HEK293 (cell line): ENCODE measurements at regions of chr15 and their contacts with region 1.

Region 1: GRCh38 chr15:78108299-78109084 is 16.1 kb downstream of the SH2D7 start:
- H3K4me3 ChIP-seq: no peak overlapping the region
- H3K27ac ChIP-seq: no peak overlapping the region
- H3K4me1 ChIP-seq: no peaks in the 10 kb centered on the region
- CTCF ChIP-seq: peak; percentile 95

Region 2: DNA sequence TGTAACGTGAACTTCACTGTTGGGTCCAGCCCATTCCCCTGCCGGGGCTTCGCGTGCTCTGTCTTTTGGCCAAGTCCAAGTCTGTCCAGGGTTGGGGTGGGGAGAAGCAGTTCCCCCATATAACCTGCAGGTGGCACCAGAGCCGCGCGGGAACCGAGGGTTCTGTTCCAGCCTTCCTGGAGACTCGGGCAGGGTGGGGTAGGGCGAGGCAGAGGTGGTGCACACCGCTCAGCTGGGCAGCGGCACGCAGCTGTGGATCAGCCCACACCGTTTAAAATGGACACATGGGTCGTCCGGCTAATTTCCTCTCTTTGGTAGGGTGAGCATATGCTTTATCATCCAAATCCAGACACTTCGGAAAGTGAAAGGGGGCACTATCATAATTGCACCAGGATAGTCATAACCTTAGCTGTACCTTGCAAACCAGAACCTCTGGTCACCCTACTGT is 149.0 kb before region 1 on chr15:
- CTCF ChIA-PET with region 1: interaction called, 183 read pairs
- POLR2A ChIA-PET with region 1: no interaction called
- H3K4me3 ChIP-seq: no peak overlapping the region
- H3K27ac ChIP-seq: no peak overlapping the region
- H3K4me1 ChIP-seq: no peaks in the 10 kb centered on the region
- CTCF ChIP-seq: peak; percentile 81

Region 3: DNA sequence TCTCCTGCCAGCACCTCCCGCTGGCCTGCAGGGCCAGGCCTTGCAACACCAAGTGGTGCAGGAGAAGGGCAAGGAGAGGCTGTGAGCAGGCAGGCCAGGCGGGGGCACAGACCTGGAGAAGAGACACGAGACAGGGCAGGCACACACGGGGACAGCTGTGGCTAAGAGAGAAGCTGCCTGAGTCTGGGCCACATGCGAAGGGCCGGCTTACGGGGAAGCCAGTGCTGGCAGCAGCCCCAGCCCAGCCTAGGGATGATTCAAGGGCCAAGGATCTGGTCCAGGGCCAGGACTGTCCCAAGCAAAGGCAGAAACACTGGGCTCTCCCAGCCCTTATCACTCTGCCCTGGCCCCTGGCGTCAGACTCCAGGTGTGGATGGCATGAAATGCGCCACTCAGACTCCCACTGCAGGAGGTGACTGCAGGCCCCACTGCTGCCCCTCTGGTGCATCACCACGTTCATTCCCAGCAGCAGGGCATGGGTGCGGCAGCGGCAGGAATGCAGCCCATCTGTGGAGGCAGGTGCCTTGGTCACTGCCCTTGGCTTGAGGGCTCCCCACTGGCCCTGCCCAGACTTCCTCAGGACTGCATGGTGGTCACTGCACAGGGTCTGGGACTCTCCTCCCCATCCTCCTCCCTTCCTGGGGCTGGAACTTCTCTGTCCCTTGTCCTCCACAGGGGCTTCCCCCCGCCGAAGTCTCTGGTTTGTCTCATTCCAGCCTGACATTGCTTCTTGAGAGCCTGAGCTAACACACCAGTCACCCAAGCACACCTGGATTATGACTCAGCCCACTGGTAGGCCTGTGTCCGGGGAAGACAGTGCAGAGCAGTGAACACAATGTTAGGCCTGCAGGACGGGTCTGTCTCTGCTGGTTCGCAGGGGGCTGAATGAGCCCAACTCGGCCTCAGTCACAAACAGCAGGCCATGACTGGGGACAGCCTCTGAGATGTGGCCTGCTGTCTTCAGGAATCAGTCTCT is 100.3 kb before region 1 on chr15:
- CTCF ChIA-PET with region 1: interaction called, 44 read pairs
- POLR2A ChIA-PET with region 1: no interaction called
- H3K4me3 ChIP-seq: no peak overlapping the region
- H3K27ac ChIP-seq: no peak overlapping the region
- H3K4me1 ChIP-seq: peaks cover 6% of the 10 kb centered on the region; the same call in 1 of the 2 replicates
- CTCF ChIP-seq: no peak

Region 4: GRCh38 chr15:78075490-78076230 is 32.8 kb before region 1 on chr15:
- CTCF ChIA-PET with region 1: interaction called, 12 read pairs
- POLR2A ChIA-PET with region 1: no interaction called
- H3K4me3 ChIP-seq: peak overlapping the region; percentile 6
- H3K27ac ChIP-seq: peak overlapping the region; percentile 64
- H3K4me1 ChIP-seq: peaks cover 26% of the 10 kb centered on the region
- CTCF ChIP-seq: no peak

Region 5: DNA sequence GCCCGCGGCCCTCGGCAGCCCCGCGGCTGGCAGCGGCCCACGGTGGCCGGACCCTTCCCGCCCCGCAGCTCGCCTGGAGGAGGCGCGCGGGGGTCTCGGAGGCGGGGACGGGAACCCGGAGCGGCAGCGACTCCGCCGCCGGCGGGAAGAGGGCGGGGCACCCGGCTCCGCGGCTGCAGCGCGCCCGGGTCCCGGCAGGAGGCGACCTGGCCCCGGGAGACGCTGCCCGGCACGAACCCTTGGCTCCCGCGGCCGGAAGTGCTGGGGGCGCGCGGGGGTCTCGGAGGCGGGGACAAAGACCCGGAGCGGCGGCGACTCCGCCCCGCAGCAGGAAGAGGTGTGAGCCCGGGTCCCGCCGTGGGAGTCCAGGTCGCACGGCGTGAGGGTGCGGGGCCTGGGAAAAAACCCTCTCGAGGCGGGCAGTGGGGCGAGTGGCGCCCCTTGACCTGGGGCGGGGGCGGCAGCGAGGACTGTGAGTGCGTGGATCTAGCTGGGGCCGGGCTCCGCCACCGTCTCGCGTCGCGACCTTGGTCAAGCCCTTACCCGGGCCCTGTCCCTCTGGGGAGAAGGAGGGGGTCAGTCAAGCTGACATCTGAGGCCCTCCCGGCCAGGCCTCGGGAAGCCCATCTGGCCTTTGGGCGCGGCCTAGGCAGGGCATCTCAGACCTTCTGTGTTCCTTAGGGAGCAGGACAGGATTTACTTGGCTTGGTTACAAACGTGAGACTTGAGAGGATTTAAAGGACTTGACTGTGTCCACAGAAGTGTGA is 23.0 kb after region 1 on chr15 and contains the start of gene CIB2:
- CTCF ChIA-PET with region 1: interaction called, 12 read pairs
- POLR2A ChIA-PET with region 1: no interaction called
- H3K4me3 ChIP-seq: peak within 1 kb of the TSS; percentile 74
- H3K27ac ChIP-seq: peak within 1 kb of the TSS; percentile 85
- H3K4me1 ChIP-seq: peaks cover 2% of the 10 kb centered on the region; the same call in 1 of the 2 replicates
- CTCF ChIP-seq: peak; percentile 30; the same call in 1 of the 2 replicates

Region 6: GRCh38 chr15:78204351-78205309 is 96.1 kb after region 1 on chr15:
- CTCF ChIA-PET with region 1: interaction called, 11 read pairs
- POLR2A ChIA-PET with region 1: no interaction called
- H3K4me3 ChIP-seq: no peak overlapping the region
- H3K27ac ChIP-seq: no peak overlapping the region
- H3K4me1 ChIP-seq: no peaks in the 10 kb centered on the region
- CTCF ChIP-seq: no peak